Astrocyte of the cerebellum (primary cell): ENCODE measurements at regions of chr9 and their contacts with region 1.

Region 1: GRCh38 chr9:70639853-70640814 is 225.7 kb upstream of the KLF9 start:
- DNase-seq: peak; percentile 55
- H3K4me3 ChIP-seq: no peak overlapping the region
- CTCF ChIP-seq: peak; percentile 49

Region 2: GRCh38 chr9:70578720-70579119 is 61.4 kb before region 1 on chr9:
- in situ Hi-C with region 1: no loop called
- DNase-seq: no peak
- H3K4me3 ChIP-seq: no peak overlapping the region
- CTCF ChIP-seq: no peak

Region 3: GRCh38 chr9:70602321-70603019 is 37.7 kb before region 1 on chr9:
- in situ Hi-C with region 1: no loop called
- DNase-seq: peak; percentile 86
- H3K4me3 ChIP-seq: no peak overlapping the region
- CTCF ChIP-seq: peak; percentile 71

Region 4: DNA sequence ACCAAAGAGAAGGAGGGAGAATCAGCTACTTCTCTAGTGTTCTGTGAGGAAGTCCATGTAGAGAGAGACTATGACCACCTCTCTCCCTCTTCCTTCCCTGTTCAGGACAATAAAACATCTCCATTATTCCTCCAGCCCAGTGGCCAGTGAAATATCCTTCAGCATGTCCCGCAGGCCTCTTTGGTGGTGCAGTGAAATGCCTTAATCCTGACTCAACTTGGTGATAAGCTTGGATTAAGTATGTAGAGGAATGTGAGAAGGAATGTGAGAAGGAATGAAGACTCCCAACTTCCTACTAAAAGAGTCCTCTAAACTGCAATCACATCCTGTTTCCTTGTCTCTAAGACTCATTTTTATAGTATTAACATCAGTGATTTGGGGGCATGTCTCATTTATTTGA is 314.0 kb after region 1 on chr9:
- in situ Hi-C with region 1: loop called (anchors 25 kb)
- DNase-seq: peak; percentile 74
- H3K4me3 ChIP-seq: no peak overlapping the region
- CTCF ChIP-seq: no peak

Region 5: DNA sequence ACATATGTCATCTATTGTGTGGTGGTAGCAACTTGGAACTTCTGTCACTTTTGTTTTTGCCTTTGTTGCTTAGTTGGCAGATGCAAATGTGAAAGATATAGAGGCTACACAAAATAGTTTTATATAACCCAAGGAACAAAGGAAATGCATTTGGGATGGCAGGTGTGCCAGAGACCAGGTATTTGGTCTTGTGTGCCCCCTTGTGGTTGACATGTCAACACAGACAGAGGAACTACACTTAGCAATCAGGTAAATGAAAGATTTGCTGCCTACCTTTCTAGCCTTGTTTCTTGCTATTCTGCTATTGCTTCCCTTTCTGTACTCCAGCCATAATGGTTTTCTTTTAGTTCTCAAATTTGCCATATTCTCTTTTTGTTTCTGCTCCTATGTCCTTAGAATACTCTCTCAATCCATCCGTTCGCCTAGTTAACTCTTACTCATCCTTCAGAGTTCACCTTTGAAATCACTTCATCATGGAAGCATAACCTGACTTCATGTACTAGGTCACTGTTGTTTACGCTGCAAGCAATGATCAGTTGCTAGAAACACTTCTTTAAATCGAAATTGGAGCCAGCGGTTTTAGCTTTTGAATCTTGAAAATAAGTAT is 361.7 kb after region 1 on chr9:
- in situ Hi-C with region 1: loop called (anchors 10 kb)
- DNase-seq: peak; percentile 9
- H3K4me3 ChIP-seq: no peak overlapping the region
- CTCF ChIP-seq: peak; percentile 58

Region 6: GRCh38 chr9:71249729-71250317 is 609.7 kb after region 1 on chr9:
- in situ Hi-C with region 1: loop called (anchors 25 kb)
- DNase-seq: peak; percentile 63
- H3K4me3 ChIP-seq: no peak overlapping the region
- CTCF ChIP-seq: peak; percentile 87